WTC11 (cell line): ENCODE measurements at regions of chr10 and their contacts with region 1.

Region 1: GRCh38 chr10:84147347-84147746 is 8.0 kb downstream of the GHITM start:
- DNase-seq: no peak
- ATAC-seq: no peak
- H3K4me3 Mint-ChIP-seq: no peak overlapping the region
- H3K27ac Mint-ChIP-seq: no peak overlapping the region
- H3K4me1 Mint-ChIP-seq: no peaks in the 10 kb centered on the region
- H3K27me3 Mint-ChIP-seq: no peaks in the 10 kb centered on the region
- CTCF ChIP-seq: no peak

Region 2: GRCh38 chr10:83862723-83863122 is 284.6 kb before region 1 on chr10:
- CTCF ChIA-PET with region 1: no interaction called
- POLR2A ChIA-PET with region 1: no interaction called
- DNase-seq: no peak
- ATAC-seq: no peak
- H3K4me3 Mint-ChIP-seq: no peak overlapping the region
- H3K27ac Mint-ChIP-seq: no peak overlapping the region
- H3K4me1 Mint-ChIP-seq: no peaks in the 10 kb centered on the region
- H3K27me3 Mint-ChIP-seq: peaks cover under 1% of the 10 kb centered on the region; the same call in 1 of the 2 replicates
- CTCF ChIP-seq: no peak

Region 3: GRCh38 chr10:84065804-84066601 is 81.3 kb before region 1 on chr10:
- CTCF ChIA-PET with region 1: no interaction called
- POLR2A ChIA-PET with region 1: no interaction called
- DNase-seq: no peak
- ATAC-seq: no peak
- H3K4me3 Mint-ChIP-seq: no peak overlapping the region
- H3K27ac Mint-ChIP-seq: no peak overlapping the region
- H3K4me1 Mint-ChIP-seq: 0 out of 2 replicates have a peak, but pooled peaks cover 5% of the 10 kb centered on the region
- H3K27me3 Mint-ChIP-seq: no peaks in the 10 kb centered on the region; the same call in 1 of the 2 replicates
- CTCF ChIP-seq: no peak

Region 4: DNA sequence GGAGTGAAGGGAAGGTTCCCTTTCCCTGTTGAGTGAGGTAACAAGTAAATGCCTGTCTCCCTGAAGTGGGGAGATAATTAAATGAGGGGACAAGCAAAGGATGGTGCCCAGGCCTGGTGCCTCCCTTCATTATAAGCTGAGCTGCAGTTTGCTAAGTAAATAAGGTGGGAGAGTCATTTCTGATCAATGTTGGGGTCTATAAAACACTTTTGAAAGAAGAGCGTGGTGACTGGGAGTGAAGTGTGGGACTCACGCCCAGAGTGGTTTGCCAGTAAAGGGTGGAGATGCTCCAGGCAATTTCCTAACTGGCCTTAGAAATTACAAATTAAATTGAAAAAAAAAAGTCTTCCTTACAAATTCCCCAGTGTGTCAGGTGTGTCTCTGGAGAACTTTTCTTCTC is 16.6 kb after region 1 on chr10:
- CTCF ChIA-PET with region 1: interaction called, 22 read pairs
- POLR2A ChIA-PET with region 1: no interaction called
- DNase-seq: no peak
- ATAC-seq: no peak
- H3K4me3 Mint-ChIP-seq: peak overlapping the region; percentile 47
- H3K27ac Mint-ChIP-seq: 0 out of 2 replicates have a peak overlapping the region, but pooled peaks have one; percentile 85
- H3K4me1 Mint-ChIP-seq: peaks cover 74% of the 10 kb centered on the region
- H3K27me3 Mint-ChIP-seq: peaks cover 5% of the 10 kb centered on the region; the same call in 1 of the 2 replicates
- CTCF ChIP-seq: no peak

Region 5: GRCh38 chr10:84175436-84175835 is 28.1 kb after region 1 on chr10:
- CTCF ChIA-PET with region 1: no interaction called
- POLR2A ChIA-PET with region 1: no interaction called
- DNase-seq: no peak
- ATAC-seq: no peak
- H3K4me3 Mint-ChIP-seq: no peak overlapping the region
- H3K27ac Mint-ChIP-seq: no peak overlapping the region
- H3K4me1 Mint-ChIP-seq: no peaks in the 10 kb centered on the region
- H3K27me3 Mint-ChIP-seq: peaks cover under 1% of the 10 kb centered on the region; the same call in 1 of the 2 replicates
- CTCF ChIP-seq: no peak

Region 6: DNA sequence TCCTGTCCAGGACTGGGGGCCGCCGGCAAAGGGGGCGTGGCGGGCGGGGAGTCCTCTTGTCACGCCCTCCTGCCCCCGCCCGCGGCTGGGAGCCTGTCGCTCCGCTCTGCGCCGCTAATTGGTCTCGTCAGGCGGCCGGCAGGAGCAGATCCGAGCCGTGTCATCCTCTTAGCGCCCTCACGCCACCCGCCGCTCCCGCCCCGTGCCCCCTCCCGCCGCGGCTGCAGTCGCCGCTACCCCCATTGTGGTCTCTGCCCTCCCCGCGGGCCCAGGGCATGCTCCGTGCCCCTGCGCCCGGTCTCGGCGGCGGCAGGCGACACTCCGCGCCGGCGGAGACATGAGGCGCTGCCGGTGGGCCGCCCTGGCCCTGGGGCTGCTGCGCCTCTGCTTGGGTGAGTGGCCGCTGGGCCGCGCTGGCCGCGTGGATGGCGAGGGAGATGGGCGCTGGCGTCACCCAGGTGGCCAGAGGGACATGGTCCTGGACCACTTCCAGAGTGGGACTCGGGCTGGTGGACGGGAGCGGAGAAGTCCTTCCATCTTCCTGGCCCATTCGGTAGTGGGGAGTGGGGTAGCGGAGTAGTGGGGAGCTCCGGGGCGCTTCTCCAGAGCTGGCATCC is 47.2 kb after region 1 on chr10 and contains the start of gene CDHR1:
- CTCF ChIA-PET with region 1: interaction called, 19 read pairs
- POLR2A ChIA-PET with region 1: no interaction called
- DNase-seq: peak; percentile 73
- ATAC-seq: peak; percentile 85
- H3K4me3 Mint-ChIP-seq: peak within 1 kb of the TSS; percentile 68
- H3K27ac Mint-ChIP-seq: no peak within 1 kb of the TSS
- H3K4me1 Mint-ChIP-seq: peaks cover 9% of the 10 kb centered on the region; the same call in 1 of the 2 replicates
- H3K27me3 Mint-ChIP-seq: peaks cover 57% of the 10 kb centered on the region
- CTCF ChIP-seq: no peak
- total RNA-seq, gene CDHR1: 5.0 to 7.2 TPM (median 6.4 TPM) in 3 replicates

Region 7: GRCh38 chr10:84205049-84205852 is 57.9 kb after region 1 on chr10:
- CTCF ChIA-PET with region 1: interaction called, 75 read pairs
- POLR2A ChIA-PET with region 1: no interaction called
- DNase-seq: peak; percentile 82
- ATAC-seq: peak; percentile 80
- H3K4me3 Mint-ChIP-seq: no peak overlapping the region
- H3K27ac Mint-ChIP-seq: no peak overlapping the region
- H3K4me1 Mint-ChIP-seq: no peaks in the 10 kb centered on the region
- H3K27me3 Mint-ChIP-seq: no peaks in the 10 kb centered on the region
- CTCF ChIP-seq: peak; percentile 75

Region 8: GRCh38 chr10:84214612-84215235 is 67.4 kb after region 1 on chr10:
- CTCF ChIA-PET with region 1: interaction called, 15 read pairs
- POLR2A ChIA-PET with region 1: no interaction called
- DNase-seq: peak; percentile 75
- ATAC-seq: peak; percentile 96
- H3K4me3 Mint-ChIP-seq: no peak overlapping the region
- H3K27ac Mint-ChIP-seq: no peak overlapping the region
- H3K4me1 Mint-ChIP-seq: peaks cover 4% of the 10 kb centered on the region; the same call in 1 of the 2 replicates
- H3K27me3 Mint-ChIP-seq: peaks cover 5% of the 10 kb centered on the region
- CTCF ChIP-seq: peak; percentile 61; the same call in 1 of the 2 replicates

Region 9: GRCh38 chr10:84375011-84375410 is 227.7 kb after region 1 on chr10:
- CTCF ChIA-PET with region 1: no interaction called
- POLR2A ChIA-PET with region 1: no interaction called
- DNase-seq: peak; percentile 23
- ATAC-seq: 0 out of 2 replicates have a peak, but pooled peaks have one; percentile 22
- H3K4me3 Mint-ChIP-seq: no peak overlapping the region
- H3K27ac Mint-ChIP-seq: peak overlapping the region; percentile 14; the same call in 1 of the 2 replicates
- H3K4me1 Mint-ChIP-seq: peaks cover 3% of the 10 kb centered on the region; the same call in 1 of the 2 replicates
- H3K27me3 Mint-ChIP-seq: no peaks in the 10 kb centered on the region
- CTCF ChIP-seq: peak; percentile 34